ENCODE measurements at regions of chr2 and their contacts with region 1.

Region 1: GRCh38 chr2:177812708-177813396 is 259.7 kb downstream of the PDE11A start:
- DNase-seq: no peak
- H3K4me3 ChIP-seq: no peak overlapping the region
- H3K27ac ChIP-seq: no peak overlapping the region
- H3K4me1 ChIP-seq: no peaks in the 10 kb centered on the region
- H3K27me3 ChIP-seq: no peaks in the 10 kb centered on the region
- CTCF ChIP-seq: no peak
- EP300 ChIP-seq: no peak
- POLR2A ChIP-seq: no peak
- RAD21 ChIP-seq: no peak

Region 2: GRCh38 chr2:177799531-177799930 is 13.3 kb before region 1 on chr2:
- CTCF ChIA-PET with region 1: interaction called, 11 read pairs
- POLR2A ChIA-PET with region 1: no interaction called
- DNase-seq: peak in 1 of 2 experiments; percentile 2
- H3K4me3 ChIP-seq: no peak overlapping the region
- H3K27ac ChIP-seq: no peak overlapping the region
- H3K4me1 ChIP-seq: peaks cover 0 to 5% (median 3%) of the 10 kb centered on the region in 4 experiments; a peak in 2 of 7 replicates
- H3K27me3 ChIP-seq: no peaks in the 10 kb centered on the region
- CTCF ChIP-seq: peak in 2 of 3 experiments; percentile 63 to 79; a peak in 3 of 4 replicates
- EP300 ChIP-seq: no peak
- POLR2A ChIP-seq: no peak
- RAD21 ChIP-seq: peak; percentile 58 to 66